PC-9 (cell line): ENCODE measurements at regions of chr13 and their contacts with region 1.

Region 1: GRCh38 chr13:109869312-109870237 is 83.2 kb upstream of the IRS2 start:
- DNase-seq: peak; percentile 82
- H3K4me3 ChIP-seq: peak overlapping the region; percentile 54; the same call in 1 of the 2 replicates
- H3K27ac ChIP-seq: peak overlapping the region; percentile 79
- H3K4me1 ChIP-seq: peaks cover 82% of the 10 kb centered on the region
- H3K27me3 ChIP-seq: no peaks in the 10 kb centered on the region
- CTCF ChIP-seq: peak; percentile 40; the same call in 1 of the 2 replicates

Region 2: GRCh38 chr13:109707044-109707741 is 162.4 kb before region 1 on chr13:
- CTCF ChIA-PET with region 1: no interaction called
- POLR2A ChIA-PET with region 1: no interaction called
- intact Hi-C with region 1: no loop called
- DNase-seq: no peak
- H3K4me3 ChIP-seq: no peak overlapping the region
- H3K27ac ChIP-seq: no peak overlapping the region
- H3K4me1 ChIP-seq: peaks cover 29% of the 10 kb centered on the region
- H3K27me3 ChIP-seq: no peaks in the 10 kb centered on the region
- CTCF ChIP-seq: no peak

Region 3: GRCh38 chr13:109803830-109804229 is 65.7 kb before region 1 on chr13:
- CTCF ChIA-PET with region 1: no interaction called
- POLR2A ChIA-PET with region 1: no interaction called
- intact Hi-C with region 1: loop called (anchors 5 kb)
- DNase-seq: peak; percentile 75 to 96
- H3K4me3 ChIP-seq: no peak overlapping the region
- H3K27ac ChIP-seq: peak overlapping the region; percentile 81
- H3K4me1 ChIP-seq: peaks cover 27% of the 10 kb centered on the region
- H3K27me3 ChIP-seq: no peaks in the 10 kb centered on the region
- CTCF ChIP-seq: no peak